ENCODE measurements at regions of chr11 and their contacts with region 1.

Region 1: GRCh38 chr11:7536100-7536499 is 22.3 kb downstream of the PPFIBP2 start:
- DNase-seq: no peak
- ATAC-seq: no peak
- H3K4me3 ChIP-seq: no peak overlapping the region
- H3K27ac ChIP-seq: no peak overlapping the region
- H3K4me1 ChIP-seq: peaks cover 73% of the 10 kb centered on the region
- H3K27me3 ChIP-seq: no peaks in the 10 kb centered on the region
- CTCF ChIP-seq: peak in 2 of 3 experiments; percentile 43 to 45; a peak in 3 of 6 replicates
- EP300 ChIP-seq: no peak
- POLR2A ChIP-seq: no peak
- RAD21 ChIP-seq: peak; percentile 11; the same call in 1 of the 2 replicates

Region 2: GRCh38 chr11:7548659-7549274 is 12.7 kb after region 1 on chr11:
- CTCF ChIA-PET with region 1: interaction called, 10 read pairs
- POLR2A ChIA-PET with region 1: interaction called, 4 read pairs
- RAD21 ChIA-PET with region 1: interaction called, 10 read pairs
- SMC1A ChIA-PET with region 1: interaction called, 10 read pairs
- in situ Hi-C with region 1: no loop called
- intact Hi-C with region 1: no loop called
- DNase-seq: no peak
- ATAC-seq: peak; percentile 97
- H3K4me3 ChIP-seq: no peak overlapping the region
- H3K27ac ChIP-seq: no peak overlapping the region; the same call in 1 of the 2 replicates
- H3K4me1 ChIP-seq: peaks cover 7% of the 10 kb centered on the region
- H3K27me3 ChIP-seq: no peaks in the 10 kb centered on the region
- CTCF ChIP-seq: peak; percentile 70 to 75 (median 74)
- EP300 ChIP-seq: no peak
- POLR2A ChIP-seq: no peak
- RAD21 ChIP-seq: peak; percentile 79

Region 3: DNA sequence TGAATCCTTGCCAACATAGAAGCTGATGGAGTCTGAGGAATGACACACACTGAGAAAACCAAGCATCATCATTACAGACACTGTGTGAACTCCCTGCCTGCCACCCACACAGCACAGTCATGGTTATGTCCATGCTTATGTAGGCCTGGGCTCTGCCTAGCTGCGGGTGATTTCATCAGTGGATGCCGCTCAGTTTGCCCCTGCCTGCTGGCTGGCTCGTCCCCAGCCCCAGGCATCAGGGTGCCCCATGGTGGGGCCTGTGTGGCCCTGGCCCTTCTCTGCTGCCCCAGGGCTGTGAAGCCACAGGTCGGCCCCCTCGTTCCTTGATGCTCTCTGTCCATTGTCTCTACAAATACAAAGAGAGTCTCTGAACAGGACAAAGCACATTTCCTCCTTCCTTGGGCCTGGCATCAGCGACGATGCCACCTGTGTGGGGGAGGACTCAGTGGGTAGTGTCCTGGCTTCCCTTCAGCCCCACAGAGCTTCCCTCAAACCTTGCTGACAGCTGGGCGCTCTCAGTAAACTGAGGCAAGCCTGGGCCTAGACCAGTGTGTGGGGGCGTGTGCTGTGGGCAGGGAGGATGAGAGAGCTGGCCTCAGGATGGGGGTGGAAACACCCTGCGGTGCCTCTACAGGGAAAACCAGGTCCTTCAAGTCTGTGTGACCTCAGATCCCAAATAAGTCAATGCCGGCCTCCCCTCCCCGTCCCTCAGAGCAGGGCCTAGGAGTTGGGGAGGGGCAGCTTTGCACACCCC is 524.9 kb after region 1 on chr11:
- CTCF ChIA-PET with region 1: no interaction called
- POLR2A ChIA-PET with region 1: no interaction called
- RAD21 ChIA-PET with region 1: no interaction called
- SMC1A ChIA-PET with region 1: no interaction called
- in situ Hi-C with region 1: no loop called
- intact Hi-C with region 1: no loop called
- DNase-seq: no peak
- ATAC-seq: peak; percentile 41
- H3K4me3 ChIP-seq: no peak overlapping the region
- H3K27ac ChIP-seq: no peak overlapping the region
- H3K4me1 ChIP-seq: no peaks in the 10 kb centered on the region
- H3K27me3 ChIP-seq: no peaks in the 10 kb centered on the region
- CTCF ChIP-seq: no peak
- EP300 ChIP-seq: no peak
- POLR2A ChIP-seq: no peak
- RAD21 ChIP-seq: no peak

Measured in GM12878 (cell line).